Activated T-helper 1 cell treated with anti-CD3 and anti-CD28 coated beads, Interleukin-12 subunit alpha, Interleukin-12 subunit beta, Interleukin-2, Interleukin-4 antibody, amounts not matched to agents 30 ng/mL and 10 ng/mL and 1 ng/mL, durations not matched to agents 14 hours and 24 hours and 36 hours (primary cell): ENCODE measurements at regions of chr1 and their contacts with region 1.

Region 1: GRCh38 chr1:112809253-112809684 is 94.1 kb upstream of the PPM1J start:
- DNase-seq: peak; percentile 48
- H3K4me3 Mint-ChIP-seq: no peak overlapping the region
- H3K27ac Mint-ChIP-seq: no peak overlapping the region
- H3K4me1 Mint-ChIP-seq: no peaks in the 10 kb centered on the region
- H3K27me3 Mint-ChIP-seq: peaks cover 12% of the 10 kb centered on the region

Region 2: GRCh38 chr1:112477550-112477949 is 331.7 kb before region 1 on chr1:
- intact Hi-C with region 1: loop called (anchors 5 kb)
- DNase-seq: no peak
- H3K4me3 Mint-ChIP-seq: no peak overlapping the region
- H3K27ac Mint-ChIP-seq: no peak overlapping the region
- H3K4me1 Mint-ChIP-seq: no peaks in the 10 kb centered on the region
- H3K27me3 Mint-ChIP-seq: peaks cover 9% of the 10 kb centered on the region

Region 3: DNA sequence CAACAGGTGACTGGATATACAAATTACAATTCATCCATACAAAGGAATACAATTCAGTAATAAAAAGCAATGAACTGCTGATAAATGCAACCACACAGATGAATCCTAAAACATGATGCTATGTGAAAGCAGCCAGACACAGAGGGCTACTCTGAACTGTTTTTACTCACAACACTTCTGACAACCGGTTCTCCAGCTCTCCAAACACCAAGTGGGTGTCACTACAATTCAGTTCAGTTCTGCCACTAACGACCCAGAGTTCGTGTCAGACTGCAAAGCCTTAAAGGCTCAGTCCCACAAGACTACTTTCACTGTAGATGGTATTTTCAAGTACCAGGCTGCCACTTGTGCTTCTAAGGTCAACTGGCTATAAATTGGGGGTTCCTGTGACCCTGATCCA is 27.4 kb after region 1 on chr1:
- intact Hi-C with region 1: no loop called
- DNase-seq: no peak
- H3K4me3 Mint-ChIP-seq: no peak overlapping the region
- H3K27ac Mint-ChIP-seq: no peak overlapping the region
- H3K4me1 Mint-ChIP-seq: peaks cover 15% of the 10 kb centered on the region
- H3K27me3 Mint-ChIP-seq: peaks cover 26% of the 10 kb centered on the region